Caco-2 (cell line): ENCODE measurements at regions of chr6 and their contacts with region 1.

Region 1: DNA sequence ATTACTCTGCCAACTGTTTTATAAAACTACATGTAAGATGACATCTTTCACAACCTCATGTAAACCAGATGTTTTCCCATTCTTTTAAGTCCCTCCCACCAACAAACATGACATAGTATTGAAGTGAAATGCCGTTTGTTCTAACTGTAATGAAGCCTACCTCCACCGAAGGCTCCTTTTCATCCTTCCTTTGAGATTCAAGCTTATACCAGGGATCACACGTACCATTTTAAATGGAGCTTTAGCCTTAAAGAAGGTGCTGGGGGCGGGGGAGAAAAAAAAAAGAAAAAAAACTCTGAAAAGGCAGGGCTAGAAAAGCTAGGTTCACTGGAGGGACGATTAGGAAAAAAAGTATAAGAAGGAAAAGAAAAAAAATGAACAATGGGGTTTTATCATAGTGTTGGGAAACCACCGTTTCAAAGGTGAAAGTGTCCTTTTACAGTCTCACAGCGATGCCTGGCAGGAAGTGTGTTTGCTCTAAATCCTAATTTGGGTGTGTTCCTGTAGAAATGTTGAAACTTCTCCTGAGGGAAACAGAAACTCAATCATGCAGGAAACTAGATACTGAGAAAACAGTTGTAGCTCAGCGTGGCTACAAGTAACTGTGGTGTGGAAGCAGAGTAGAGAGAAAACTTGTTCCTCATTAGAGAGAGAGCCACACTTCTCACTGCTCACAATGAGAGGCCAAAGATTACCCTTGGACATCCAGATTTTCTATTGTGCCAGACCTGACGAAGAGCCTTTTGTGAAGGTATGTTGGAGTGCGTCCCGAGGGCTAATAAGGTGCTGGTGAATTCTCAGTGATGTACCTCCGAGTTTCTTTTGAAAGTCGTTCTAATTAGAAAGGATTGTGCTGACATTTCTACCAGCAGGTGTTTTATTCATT is 37.6 kb upstream of the HINT3 start:
- DNase-seq: peak; percentile 73
- H3K4me3 ChIP-seq: peak overlapping the region; percentile 37
- H3K4me3 Mint-ChIP-seq: peak overlapping the region; percentile 73
- H3K27ac Mint-ChIP-seq: peak overlapping the region; percentile 92
- H3K4me1 ChIP-seq: peaks cover 47% of the 10 kb centered on the region
- H3K4me1 Mint-ChIP-seq: peaks cover 59% of the 10 kb centered on the region
- H3K27me3 ChIP-seq: no peaks in the 10 kb centered on the region
- H3K27me3 Mint-ChIP-seq: no peaks in the 10 kb centered on the region
- CTCF ChIP-seq: no peak

Region 2: GRCh38 chr6:125872259-125872921 is 46.5 kb before region 1 on chr6:
- CTCF ChIA-PET with region 1: no interaction called
- POLR2A ChIA-PET with region 1: interaction called, 6 read pairs
- intact Hi-C with region 1: loop called (anchors 1 kb)
- DNase-seq: peak; percentile 57 to 58
- H3K4me3 ChIP-seq: no peak overlapping the region
- H3K4me3 Mint-ChIP-seq: peak overlapping the region; percentile 46
- H3K27ac Mint-ChIP-seq: peak overlapping the region; percentile 80
- H3K4me1 ChIP-seq: peaks cover 61% of the 10 kb centered on the region
- H3K4me1 Mint-ChIP-seq: peaks cover 37% of the 10 kb centered on the region
- H3K27me3 ChIP-seq: no peaks in the 10 kb centered on the region
- H3K27me3 Mint-ChIP-seq: no peaks in the 10 kb centered on the region
- CTCF ChIP-seq: no peak

Region 3: DNA sequence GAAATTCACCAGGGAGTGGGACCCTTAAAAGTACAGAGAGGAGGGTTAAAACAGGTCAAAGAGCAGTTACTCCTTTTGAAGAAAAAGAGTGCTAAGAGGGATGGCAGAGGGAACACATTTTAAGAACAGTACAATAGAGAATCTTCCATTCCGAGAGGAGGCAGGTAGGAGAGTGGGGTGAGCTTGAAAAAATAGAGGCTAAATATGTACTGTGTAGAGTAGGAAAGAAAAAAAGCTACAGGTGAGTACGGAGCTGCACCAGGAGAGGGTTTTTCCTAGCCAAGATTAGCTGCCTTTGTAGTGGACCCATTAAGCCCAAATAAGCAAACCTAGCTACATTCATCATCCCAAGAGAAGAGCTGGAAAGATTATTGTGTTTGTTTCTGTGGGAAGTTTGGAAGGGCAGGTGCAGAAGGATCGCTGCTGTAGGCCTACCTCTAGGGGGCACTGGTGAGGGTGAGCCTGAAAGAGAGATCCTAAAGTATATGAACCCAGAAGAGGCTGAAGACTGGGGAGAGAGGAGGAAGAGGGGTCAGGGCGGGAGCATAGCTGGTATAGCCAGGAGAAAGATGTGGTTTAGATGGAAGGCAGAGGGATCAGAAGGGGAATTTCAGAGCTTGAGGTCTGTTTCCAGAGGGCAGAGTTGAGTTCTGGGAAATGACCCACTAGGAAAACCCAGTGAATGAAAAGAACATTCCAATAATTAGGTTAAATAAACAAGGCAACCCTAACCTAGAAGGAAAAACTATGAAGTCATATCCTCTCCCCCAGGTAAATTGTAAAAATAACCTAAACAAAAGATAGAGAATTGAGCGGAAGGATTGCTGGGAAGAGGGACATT is 12.5 kb before region 1 on chr6:
- CTCF ChIA-PET with region 1: interaction called, 5 read pairs
- POLR2A ChIA-PET with region 1: interaction called, 4 read pairs
- intact Hi-C with region 1: loop called (anchors 1 kb)
- DNase-seq: peak; percentile 53 to 64
- H3K4me3 ChIP-seq: no peak overlapping the region
- H3K4me3 Mint-ChIP-seq: no peak overlapping the region
- H3K27ac Mint-ChIP-seq: peak overlapping the region; percentile 7
- H3K4me1 ChIP-seq: peaks cover 29% of the 10 kb centered on the region
- H3K4me1 Mint-ChIP-seq: peaks cover 51% of the 10 kb centered on the region
- H3K27me3 ChIP-seq: no peaks in the 10 kb centered on the region
- H3K27me3 Mint-ChIP-seq: no peaks in the 10 kb centered on the region
- CTCF ChIP-seq: peak; percentile 68 to 71

Region 4: DNA sequence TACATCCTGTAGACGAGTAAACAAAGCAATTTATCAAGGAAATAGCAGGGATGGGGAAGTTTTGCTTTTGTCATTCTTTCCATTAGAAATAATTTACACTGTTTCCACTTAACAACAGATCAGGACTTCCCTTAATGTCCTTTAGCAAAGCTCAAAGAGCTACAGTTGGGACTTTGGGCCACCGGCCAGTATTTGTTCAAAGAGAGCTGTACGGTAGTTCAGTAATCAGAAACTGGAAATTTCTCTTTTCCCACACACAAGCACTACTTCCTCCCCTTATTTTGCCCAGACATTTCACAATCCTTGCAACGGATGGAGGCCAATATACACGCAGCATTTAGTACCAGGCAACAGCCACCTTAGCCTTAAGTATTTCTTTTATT is 25.5 kb after region 1 on chr6:
- CTCF ChIA-PET with region 1: interaction called, 3 read pairs
- POLR2A ChIA-PET with region 1: interaction called, 5 read pairs
- intact Hi-C with region 1: loop called (anchors 1 kb)
- DNase-seq: peak in 1 of 2 experiments; percentile 46
- H3K4me3 ChIP-seq: no peak overlapping the region
- H3K4me3 Mint-ChIP-seq: peak overlapping the region; percentile 27
- H3K27ac Mint-ChIP-seq: no peak overlapping the region
- H3K4me1 ChIP-seq: peaks cover 98% of the 10 kb centered on the region
- H3K4me1 Mint-ChIP-seq: peaks cover 52% of the 10 kb centered on the region
- H3K27me3 ChIP-seq: no peaks in the 10 kb centered on the region
- H3K27me3 Mint-ChIP-seq: no peaks in the 10 kb centered on the region
- CTCF ChIP-seq: no peak

Region 5: DNA sequence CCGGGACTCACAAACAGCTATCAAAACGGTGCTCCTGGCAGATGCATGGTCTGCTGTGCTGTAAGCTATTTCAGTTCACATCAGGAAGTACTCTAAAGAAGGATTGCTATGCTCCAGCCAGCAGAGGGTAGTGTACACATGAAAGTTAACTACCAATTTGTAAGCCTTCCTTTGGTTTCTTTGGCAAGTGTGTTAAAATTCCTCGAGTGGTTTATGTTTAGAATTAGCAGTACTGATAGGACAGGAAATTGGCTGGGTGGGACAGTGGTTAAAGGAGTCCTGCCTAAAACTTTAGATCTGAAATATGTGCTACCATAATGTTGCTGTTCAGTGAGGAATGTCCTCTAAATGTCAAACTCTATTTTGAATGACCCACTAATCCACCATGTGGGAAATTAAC is 114.8 kb after region 1 on chr6:
- CTCF ChIA-PET with region 1: no interaction called
- POLR2A ChIA-PET with region 1: no interaction called
- intact Hi-C with region 1: no loop called
- DNase-seq: peak; percentile 60 to 68
- H3K4me3 ChIP-seq: no peak overlapping the region
- H3K4me3 Mint-ChIP-seq: no peak overlapping the region
- H3K27ac Mint-ChIP-seq: peak overlapping the region; percentile 48
- H3K4me1 ChIP-seq: peaks cover 54% of the 10 kb centered on the region
- H3K4me1 Mint-ChIP-seq: peaks cover 37% of the 10 kb centered on the region
- H3K27me3 ChIP-seq: no peaks in the 10 kb centered on the region
- H3K27me3 Mint-ChIP-seq: no peaks in the 10 kb centered on the region
- CTCF ChIP-seq: peak; percentile 47 to 78

Region 6: GRCh38 chr6:126156973-126157372 is 238.0 kb after region 1 on chr6:
- CTCF ChIA-PET with region 1: no interaction called
- POLR2A ChIA-PET with region 1: no interaction called
- intact Hi-C with region 1: no loop called
- DNase-seq: no peak
- H3K4me3 ChIP-seq: no peak overlapping the region
- H3K4me3 Mint-ChIP-seq: no peak overlapping the region
- H3K27ac Mint-ChIP-seq: no peak overlapping the region
- H3K4me1 ChIP-seq: peaks cover 5% of the 10 kb centered on the region; the same call in 1 of the 2 replicates
- H3K4me1 Mint-ChIP-seq: peaks cover 3% of the 10 kb centered on the region
- H3K27me3 ChIP-seq: no peaks in the 10 kb centered on the region
- H3K27me3 Mint-ChIP-seq: no peaks in the 10 kb centered on the region
- CTCF ChIP-seq: no peak